OCI-LY7 (cell line): ENCODE measurements at regions of chr1 and their contacts with region 1.

Region 1: GRCh38 chr1:230167419-230167852 is 100.4 kb downstream of the GALNT2 start:
- DNase-seq: peak; percentile 79
- H3K4me3 ChIP-seq: no peak overlapping the region
- H3K27ac ChIP-seq: no peak overlapping the region
- H3K4me1 ChIP-seq: peaks cover 42% of the 10 kb centered on the region
- CTCF ChIP-seq: peak; percentile 92

Region 2: GRCh38 chr1:229714964-229715603 is 452.4 kb before region 1 on chr1:
- CTCF ChIA-PET with region 1: no interaction called
- POLR2A ChIA-PET with region 1: no interaction called
- intact Hi-C with region 1: loop called (anchors 5 kb)
- DNase-seq: peak; percentile 62
- H3K4me3 ChIP-seq: no peak overlapping the region
- H3K27ac ChIP-seq: no peak overlapping the region
- H3K4me1 ChIP-seq: no peaks in the 10 kb centered on the region
- CTCF ChIP-seq: peak; percentile 90

Region 3: DNA sequence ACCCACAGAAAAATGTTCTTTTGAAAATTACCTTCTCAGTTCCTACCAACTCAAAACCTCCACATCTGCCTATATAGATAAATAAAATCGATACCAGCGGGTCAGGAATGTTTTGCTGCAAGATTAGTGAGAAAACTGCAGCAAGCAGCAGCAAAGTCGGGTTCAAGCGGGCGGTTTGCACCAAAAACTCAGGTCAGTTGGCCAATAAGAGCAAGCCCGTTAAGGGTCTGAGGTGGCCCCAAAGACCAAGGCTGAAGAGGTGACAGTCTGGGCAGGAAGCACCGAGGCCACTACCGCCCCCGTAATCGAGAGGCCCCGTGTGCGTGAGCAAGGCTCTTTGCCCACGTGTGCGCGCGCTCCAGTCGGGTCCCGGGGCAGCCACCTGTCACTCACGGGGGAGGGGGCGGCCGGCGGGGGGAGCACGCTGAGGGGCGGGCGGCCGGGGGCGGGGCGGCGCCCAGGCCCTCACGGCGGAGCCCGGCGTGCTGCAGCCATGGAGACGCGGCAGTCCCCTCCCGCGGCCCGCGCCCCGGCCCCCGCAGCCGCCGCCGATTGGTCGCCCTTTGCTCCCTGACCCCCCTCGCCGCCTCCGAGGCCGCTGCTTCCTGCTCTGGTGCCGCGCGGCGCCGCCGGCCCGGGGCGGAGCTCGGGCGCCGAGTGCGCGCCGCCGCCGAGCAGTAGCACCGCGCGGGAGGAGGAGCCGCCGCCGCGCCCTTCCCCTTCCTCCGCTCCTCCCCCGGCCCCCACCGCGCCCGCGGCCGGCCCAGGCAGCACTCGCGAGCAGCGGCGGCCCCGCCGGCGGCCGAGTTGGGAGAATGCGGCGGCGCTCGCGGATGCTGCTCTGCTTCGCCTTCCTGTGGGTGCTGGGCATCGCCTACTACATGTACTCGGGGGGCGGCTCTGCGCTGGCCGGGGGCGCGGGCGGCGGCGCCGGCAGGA is 100.7 kb before region 1 on chr1 and contains the start of gene GALNT2:
- CTCF ChIA-PET with region 1: no interaction called
- POLR2A ChIA-PET with region 1: no interaction called
- intact Hi-C with region 1: loop called (anchors 5 kb)
- DNase-seq: peak; percentile 93
- H3K4me3 ChIP-seq: peak within 1 kb of the TSS; percentile 92
- H3K27ac ChIP-seq: peak within 1 kb of the TSS; percentile 53
- H3K4me1 ChIP-seq: peaks cover 26% of the 10 kb centered on the region
- CTCF ChIP-seq: no peak
- total RNA-seq, gene GALNT2: 26.3 and 29.9 TPM in 2 replicates

Region 4: GRCh38 chr1:230120926-230121381 is 46.5 kb before region 1 on chr1:
- CTCF ChIA-PET with region 1: no interaction called
- POLR2A ChIA-PET with region 1: no interaction called
- intact Hi-C with region 1: loop called (anchors 1 kb)
- DNase-seq: peak; percentile 72
- H3K4me3 ChIP-seq: peak overlapping the region; percentile 40
- H3K27ac ChIP-seq: peak overlapping the region; percentile 95
- H3K4me1 ChIP-seq: peaks cover 78% of the 10 kb centered on the region
- CTCF ChIP-seq: peak; percentile 82

Region 5: GRCh38 chr1:230310381-230311163 is 143.1 kb after region 1 on chr1:
- CTCF ChIA-PET with region 1: no interaction called
- POLR2A ChIA-PET with region 1: no interaction called
- intact Hi-C with region 1: loop called (anchors 5 kb)
- DNase-seq: peak; percentile 74
- H3K4me3 ChIP-seq: no peak overlapping the region
- H3K27ac ChIP-seq: no peak overlapping the region
- H3K4me1 ChIP-seq: peaks cover 4% of the 10 kb centered on the region
- CTCF ChIP-seq: peak; percentile 96